ENCODE measurements at regions of chr19 and their contacts with region 1.

Region 1: DNA sequence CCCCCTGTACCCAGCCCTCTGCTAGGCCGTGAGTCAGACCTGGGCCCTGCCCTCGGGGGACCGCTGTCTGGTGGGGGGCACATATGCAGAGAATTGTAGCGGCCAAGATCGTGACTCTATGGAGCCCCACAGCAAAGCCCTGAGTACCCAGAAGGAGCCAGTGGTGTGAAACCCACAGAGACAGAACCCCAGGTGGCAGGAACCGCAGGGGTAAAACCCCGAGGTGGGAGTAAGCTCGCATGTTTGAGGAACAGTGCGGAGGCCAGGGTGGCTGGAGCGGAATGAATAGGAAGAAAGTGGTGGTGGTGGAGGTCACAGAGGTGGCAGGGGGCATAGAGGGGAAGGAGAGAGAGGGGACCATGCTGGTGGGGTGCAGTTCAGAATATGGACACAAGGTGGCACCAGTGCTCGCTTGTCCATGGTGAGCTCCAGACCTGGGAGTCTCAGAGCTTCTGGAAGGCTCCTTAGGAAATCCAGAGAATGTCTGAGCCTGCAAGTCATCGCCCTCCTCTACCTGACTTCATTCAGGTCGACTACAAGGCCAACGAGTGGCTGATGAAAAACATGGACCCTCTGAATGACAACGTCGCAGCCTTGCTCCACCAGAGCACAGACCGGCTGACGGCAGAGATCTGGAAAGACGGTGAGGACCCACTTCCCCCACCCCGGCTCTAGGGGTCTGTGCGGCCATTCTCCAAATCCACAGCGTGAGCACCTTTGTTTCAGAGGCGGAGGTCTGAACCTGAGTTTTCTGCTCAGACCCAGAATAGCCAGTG is 48.9 kb downstream of the MYH14 start:
- DNase-seq: no peak
- H3K4me3 Mint-ChIP-seq: no peak overlapping the region
- H3K27ac Mint-ChIP-seq: no peak overlapping the region
- H3K4me1 Mint-ChIP-seq: no peaks in the 10 kb centered on the region
- H3K27me3 Mint-ChIP-seq: no peaks in the 10 kb centered on the region

Region 2: DNA sequence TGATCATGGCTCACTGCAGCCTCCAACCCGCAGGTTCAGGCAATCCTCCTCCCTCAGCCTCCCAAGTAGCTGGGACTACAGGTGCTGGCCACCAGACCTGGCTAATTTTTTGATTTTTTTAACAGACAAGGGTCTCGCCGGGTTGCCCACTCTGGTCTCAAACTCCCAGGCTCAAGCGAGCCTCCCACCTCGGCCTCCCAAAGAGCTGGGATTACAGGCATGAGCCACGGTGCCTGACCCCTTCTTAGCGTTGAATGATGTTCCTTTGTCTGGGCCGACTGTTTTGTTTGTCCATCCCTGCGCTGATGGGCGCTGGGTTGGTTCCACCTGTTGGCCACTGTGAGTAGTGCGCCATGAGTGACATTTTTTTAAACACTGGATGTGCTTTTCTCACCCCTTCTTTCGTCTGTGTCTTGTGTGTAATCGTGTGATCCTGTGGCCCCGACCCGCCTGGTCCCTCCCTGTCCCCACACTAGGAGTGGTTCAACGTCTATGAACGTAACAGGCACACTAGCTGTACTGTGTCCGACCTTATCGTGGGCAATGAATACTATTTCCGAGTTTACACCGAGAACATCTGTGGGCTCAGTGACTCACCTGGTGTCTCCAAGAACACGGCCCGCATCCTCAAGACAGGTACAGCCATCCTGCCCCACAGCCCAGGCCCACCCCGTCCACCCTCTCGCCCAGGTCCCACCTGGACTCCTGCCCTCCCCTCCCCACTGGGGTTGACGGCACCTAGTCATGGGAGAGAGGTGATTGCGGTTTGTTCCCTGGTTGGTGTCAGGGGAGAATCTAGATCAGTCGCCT is 209.0 kb after region 1 on chr19:
- intact Hi-C with region 1: loop called (anchors 5 kb)
- DNase-seq: peak; percentile 56
- H3K4me3 Mint-ChIP-seq: no peak overlapping the region
- H3K27ac Mint-ChIP-seq: no peak overlapping the region
- H3K4me1 Mint-ChIP-seq: peaks cover 8% of the 10 kb centered on the region
- H3K27me3 Mint-ChIP-seq: no peaks in the 10 kb centered on the region

Measured in activated T-helper 1 cell treated with anti-CD3 and anti-CD28 coated beads, Interleukin-12 subunit alpha, Interleukin-12 subunit beta, Interleukin-2, Interleukin-4 antibody, amounts not matched to agents 30 ng/mL and 10 ng/mL and 1 ng/mL, durations not matched to agents 14 hours and 24 hours and 36 hours (primary cell).